A673 (cell line): ENCODE measurements at regions of chr15 and their contacts with region 1.

Region 1: DNA sequence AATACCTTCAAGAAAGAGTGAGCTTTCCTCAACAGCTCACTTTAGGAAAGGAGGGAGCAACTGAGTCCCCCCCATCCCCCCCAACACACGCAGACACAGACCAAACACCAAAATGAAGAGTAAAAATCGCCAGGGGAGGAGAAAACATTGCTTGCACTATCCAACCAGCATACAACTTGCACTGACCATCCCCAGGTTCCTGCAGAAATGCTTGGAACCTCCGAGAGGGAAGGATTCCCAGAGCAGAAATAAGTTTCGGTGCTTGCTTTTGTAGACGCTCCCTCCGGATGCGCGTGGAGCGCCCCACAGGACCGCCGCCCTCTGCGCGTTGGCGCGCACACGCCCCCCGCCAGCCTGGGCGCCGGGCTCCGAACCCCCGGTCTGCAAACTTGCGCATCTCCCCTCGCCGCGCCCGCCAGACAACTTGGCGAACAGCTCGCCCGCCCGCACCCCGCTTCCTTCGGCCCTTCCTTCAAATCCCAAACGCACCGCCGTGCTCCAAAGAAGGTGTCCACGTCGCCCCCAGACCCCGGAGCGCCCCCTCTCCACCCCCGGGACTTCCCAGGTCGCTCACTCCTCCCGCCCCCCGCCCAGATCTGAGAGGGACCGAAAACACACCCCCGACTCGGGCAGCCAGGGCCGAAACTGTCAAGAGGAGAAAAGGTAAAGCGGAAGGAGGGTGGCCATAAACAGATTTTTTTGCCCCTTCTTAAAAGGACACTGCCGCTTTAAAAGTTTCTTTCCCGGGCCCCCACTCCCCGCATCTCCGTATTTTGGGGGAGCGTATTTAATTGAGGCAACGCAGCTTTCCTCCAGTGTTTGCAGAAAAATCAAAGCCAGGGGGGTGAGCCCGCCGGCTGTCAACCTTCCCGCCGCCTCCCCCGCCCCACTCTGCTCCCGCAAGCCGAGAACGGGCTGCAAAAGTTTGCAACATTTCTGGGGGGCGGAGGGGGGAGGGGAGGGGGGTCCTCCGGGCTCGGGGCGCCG is 859 bp downstream of the RORA start:
- DNase-seq: peak; percentile 25
- H3K4me3 ChIP-seq: peak overlapping the region; percentile 77
- H3K27ac ChIP-seq: no peak overlapping the region
- H3K4me1 ChIP-seq: peaks cover 17% of the 10 kb centered on the region
- H3K27me3 ChIP-seq: peaks cover 16% of the 10 kb centered on the region
- CTCF ChIP-seq: no peak

Region 2: GRCh38 chr15:61097852-61098251 is 130.4 kb before region 1 on chr15:
- CTCF ChIA-PET with region 1: interaction called, 10 read pairs
- POLR2A ChIA-PET with region 1: no interaction called
- intact Hi-C with region 1: no loop called
- DNase-seq: no peak
- H3K4me3 ChIP-seq: no peak overlapping the region
- H3K27ac ChIP-seq: no peak overlapping the region
- H3K4me1 ChIP-seq: no peaks in the 10 kb centered on the region
- H3K27me3 ChIP-seq: no peaks in the 10 kb centered on the region
- CTCF ChIP-seq: no peak